ENCODE measurements at regions of chr3 and their contacts with region 1.

Region 1: GRCh38 chr3:47522082-47522987 is 8.8 kb upstream of the ELP6 start:
- DNase-seq: peak; percentile 92
- H3K4me3 ChIP-seq: no peak overlapping the region
- H3K27ac ChIP-seq: no peak overlapping the region
- H3K4me1 ChIP-seq: no peaks in the 10 kb centered on the region
- H3K27me3 ChIP-seq: no peaks in the 10 kb centered on the region; the same call in 1 of the 2 replicates

Region 2: DNA sequence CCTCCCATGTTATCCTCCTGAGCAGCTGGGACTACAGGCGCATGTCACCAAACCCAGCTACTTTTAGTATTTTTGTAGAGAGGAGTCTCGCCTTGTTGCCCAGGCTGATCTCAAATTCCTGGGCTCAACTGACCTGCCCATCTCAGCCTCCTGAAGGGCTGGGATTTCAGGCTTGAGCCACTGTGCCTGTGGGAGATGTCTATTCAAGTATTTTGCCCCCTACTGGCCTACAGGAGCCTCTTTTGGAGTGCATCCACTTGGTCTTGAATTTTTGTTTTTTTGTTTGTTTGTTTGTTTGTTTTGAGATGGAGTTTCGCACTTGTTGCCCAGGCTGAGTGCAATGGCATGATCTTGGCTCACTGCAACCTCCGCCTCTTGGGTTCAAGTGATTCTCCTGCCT is 277.4 kb after region 1 on chr3:
- in situ Hi-C with region 1: loop called (anchors 10 kb)
- DNase-seq: peak; percentile 59
- H3K4me3 ChIP-seq: no peak overlapping the region
- H3K27ac ChIP-seq: no peak overlapping the region
- H3K4me1 ChIP-seq: peaks cover 20% of the 10 kb centered on the region
- H3K27me3 ChIP-seq: no peaks in the 10 kb centered on the region

Measured in GM23248 (cell line).